Mammary epithelial cell (primary cell): ENCODE measurements at regions of chr22 and their contacts with region 1.

Region 1: DNA sequence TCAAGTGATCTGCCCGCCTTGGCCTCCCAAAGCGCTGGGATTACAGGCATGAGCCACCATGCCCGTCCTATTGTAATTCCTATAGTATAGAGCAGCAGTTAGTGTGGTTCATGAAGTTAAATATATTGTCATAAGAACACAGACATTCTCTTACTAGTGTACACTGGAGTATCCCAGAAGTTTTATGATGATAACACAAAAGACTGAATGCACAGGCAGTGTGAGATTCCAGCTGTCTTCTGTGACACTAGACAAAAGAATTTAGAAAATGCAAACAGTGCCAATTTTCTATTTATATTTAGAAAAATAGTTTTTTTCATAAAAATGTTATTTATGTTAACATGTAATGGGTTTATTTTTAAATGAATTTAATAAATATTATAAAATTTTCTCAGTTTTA is 39.4 kb upstream of the RBX1 start:
- DNase-seq: no peak
- H3K4me3 ChIP-seq: no peak overlapping the region
- H3K27ac ChIP-seq: no peak overlapping the region
- H3K4me1 ChIP-seq: no peaks in the 10 kb centered on the region
- H3K27me3 ChIP-seq: no peaks in the 10 kb centered on the region
- CTCF ChIP-seq: no peak

Region 2: DNA sequence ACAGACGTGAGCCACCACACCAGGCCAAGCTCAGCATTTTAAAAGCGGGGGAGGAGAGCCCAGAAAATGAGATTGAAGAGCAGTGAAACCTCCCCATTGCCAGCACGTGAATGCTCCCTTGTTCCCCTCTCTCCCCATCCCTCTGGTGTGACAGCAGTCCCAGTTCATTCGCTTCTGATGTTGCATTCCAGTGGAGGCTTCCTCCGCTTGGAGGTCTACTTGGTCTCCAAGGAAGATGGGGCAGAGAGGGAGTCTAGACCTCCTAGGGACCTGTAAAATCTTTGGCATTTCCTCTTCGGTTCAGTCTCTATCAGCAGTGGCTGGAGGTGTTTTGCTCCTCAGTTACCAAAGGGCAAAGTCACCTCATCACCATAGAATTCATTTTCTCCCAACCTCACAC is 150.4 kb after region 1 on chr22:
- CTCF ChIA-PET with region 1: interaction called, 14 read pairs
- dilution Hi-C with region 1: no loop called
- in situ Hi-C with region 1: no loop called
- intact Hi-C with region 1: no loop called
- DNase-seq: no peak
- H3K4me3 ChIP-seq: no peak overlapping the region
- H3K27ac ChIP-seq: no peak overlapping the region
- H3K4me1 ChIP-seq: no peaks in the 10 kb centered on the region
- H3K27me3 ChIP-seq: no peaks in the 10 kb centered on the region
- CTCF ChIP-seq: no peak

Region 3: DNA sequence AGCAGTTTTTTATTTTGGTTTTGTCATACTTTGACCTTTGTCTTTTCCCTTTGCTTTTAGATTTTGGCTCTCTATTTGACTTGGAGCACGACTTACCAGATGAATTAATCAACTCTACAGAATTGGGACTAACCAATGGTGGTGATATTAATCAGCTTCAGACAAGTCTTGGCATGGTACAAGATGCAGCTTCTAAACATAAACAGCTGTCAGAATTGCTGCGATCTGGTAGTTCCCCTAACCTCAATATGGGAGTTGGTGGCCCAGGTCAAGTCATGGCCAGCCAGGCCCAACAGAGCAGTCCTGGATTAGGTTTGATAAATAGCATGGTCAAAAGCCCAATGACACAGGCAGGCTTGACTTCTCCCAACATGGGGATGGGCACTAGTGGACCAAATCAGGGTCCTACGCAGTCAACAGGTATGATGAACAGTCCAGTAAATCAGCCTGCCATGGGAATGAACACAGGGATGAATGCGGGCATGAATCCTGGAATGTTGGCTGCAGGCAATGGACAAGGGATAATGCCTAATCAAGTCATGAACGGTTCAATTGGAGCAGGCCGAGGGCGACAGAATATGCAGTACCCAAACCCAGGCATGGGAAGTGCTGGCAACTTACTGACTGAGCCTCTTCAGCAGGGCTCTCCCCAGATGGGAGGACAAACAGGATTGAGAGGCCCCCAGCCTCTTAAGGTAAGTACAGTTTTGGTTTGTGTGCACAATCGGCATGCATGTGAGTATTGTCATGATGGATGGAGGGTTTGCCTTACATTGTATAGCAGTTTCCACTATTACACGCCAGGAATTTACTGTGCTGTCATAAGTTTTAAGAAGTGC is 205.6 kb after region 1 on chr22:
- CTCF ChIA-PET with region 1: no interaction called
- dilution Hi-C with region 1: no loop called
- in situ Hi-C with region 1: no loop called
- intact Hi-C with region 1: no loop called
- DNase-seq: no peak
- H3K4me3 ChIP-seq: no peak overlapping the region
- H3K27ac ChIP-seq: no peak overlapping the region
- H3K4me1 ChIP-seq: no peaks in the 10 kb centered on the region
- H3K27me3 ChIP-seq: no peaks in the 10 kb centered on the region
- CTCF ChIP-seq: no peak